ENCODE measurements at regions of chr10 and their contacts with region 1.

Region 1: DNA sequence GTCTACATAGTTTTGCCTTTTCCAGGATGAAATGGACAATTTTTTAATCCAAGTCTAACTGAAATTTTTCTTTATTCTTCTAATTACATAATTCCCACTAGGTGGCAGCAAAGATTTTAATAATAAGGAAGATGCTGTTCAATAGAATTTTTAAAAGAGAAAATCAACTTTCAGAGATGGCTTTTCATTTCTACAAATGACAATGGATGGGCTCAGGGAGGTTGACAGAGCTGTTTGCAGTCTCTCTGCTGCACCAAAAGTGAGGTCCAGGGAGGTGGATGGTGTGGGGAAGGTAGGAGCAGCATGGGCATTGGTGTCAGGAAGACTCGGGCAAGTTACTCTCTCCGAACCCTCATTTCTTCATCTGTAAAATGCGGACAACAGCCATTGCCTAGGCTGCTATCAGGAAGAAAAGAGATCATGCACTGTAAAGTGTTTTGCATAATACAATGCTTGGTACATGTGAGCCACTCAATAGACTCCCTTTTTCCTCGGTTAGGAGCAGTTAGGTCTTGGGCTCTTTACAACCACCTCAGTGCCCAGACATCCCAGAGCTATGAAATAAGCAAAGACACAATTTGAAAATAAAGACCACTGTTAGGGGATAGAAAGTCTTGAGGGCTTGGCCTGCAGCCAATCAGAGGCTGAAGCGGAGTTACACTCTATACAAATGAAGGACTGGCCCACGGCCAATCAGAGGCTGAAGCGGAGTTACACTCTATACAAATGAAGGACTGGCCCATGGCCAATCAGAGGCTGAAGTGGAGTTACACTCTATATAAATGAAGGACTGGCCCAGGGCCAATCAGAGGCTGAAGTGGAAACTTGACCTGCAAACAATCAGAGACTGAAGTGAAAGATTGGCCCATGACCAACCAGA is 107.1 kb downstream of the ABLIM1 start:
- DNase-seq: no peak
- H3K4me3 ChIP-seq: peak overlapping the region; percentile 13 to 46
- H3K27ac ChIP-seq: no peak overlapping the region
- H3K4me1 ChIP-seq: peaks cover 0 to 2% of the 10 kb centered on the region in 2 donors
- H3K27me3 ChIP-seq: no peaks in the 10 kb centered on the region
- CTCF ChIP-seq: peak; percentile 36 to 68 (median 45)

Region 2: DNA sequence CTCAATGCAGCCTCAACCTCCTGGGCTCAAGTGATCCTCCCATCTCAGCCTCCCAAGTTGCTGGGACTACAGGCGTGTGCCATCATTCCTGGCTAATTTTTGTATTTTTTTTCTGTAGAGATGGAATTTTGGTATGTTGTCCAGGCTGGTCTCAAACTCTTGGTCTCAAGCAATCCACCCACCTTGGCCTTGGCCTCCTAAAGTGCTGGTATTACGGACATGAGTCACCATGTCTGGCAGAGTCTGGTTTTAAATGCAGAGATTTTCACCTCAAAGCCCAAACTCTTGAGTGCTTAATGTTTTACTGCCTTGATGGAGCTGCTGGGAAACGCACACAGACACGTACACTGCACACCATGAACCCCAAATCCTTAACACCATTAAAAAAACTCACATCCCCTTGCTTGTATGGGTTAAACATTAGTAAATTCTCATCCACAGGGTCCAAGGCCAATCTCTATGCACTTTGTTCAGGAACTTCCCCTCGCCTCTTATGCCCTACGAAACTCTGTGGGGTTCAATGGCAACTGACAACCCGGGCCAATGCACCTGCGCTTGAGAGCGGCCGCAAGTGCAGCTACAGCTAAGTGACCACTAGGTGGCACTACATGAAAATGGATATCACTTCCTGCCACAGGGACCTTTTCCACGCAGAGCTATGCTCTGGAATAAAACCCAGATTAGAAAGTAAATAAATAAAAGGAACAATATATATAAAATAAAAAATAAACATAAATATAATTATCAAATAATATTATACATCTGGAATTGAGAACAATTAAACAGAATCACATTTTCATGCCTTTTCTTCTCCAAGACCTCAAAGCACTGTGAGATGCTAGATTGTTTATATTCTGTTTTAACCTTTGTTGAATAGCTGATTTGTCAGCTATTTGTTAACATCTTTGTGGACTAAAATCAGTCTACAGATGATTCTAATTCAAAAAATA is 79.8 kb before region 1 on chr10:
- intact Hi-C with region 1: loop called (anchors 1 kb)
- DNase-seq: peak in 1 of 2 donors; percentile 75
- H3K4me3 ChIP-seq: no peak overlapping the region
- H3K27ac ChIP-seq: no peak overlapping the region
- H3K4me1 ChIP-seq: no peaks in the 10 kb centered on the region
- H3K27me3 ChIP-seq: no peaks in the 10 kb centered on the region
- CTCF ChIP-seq: peak; percentile 75 to 94 (median 92)

Region 3: GRCh38 chr10:114698271-114699061 is 147.5 kb after region 1 on chr10:
- intact Hi-C with region 1: loop called (anchors 1 kb)
- DNase-seq: no peak
- H3K4me3 ChIP-seq: no peak overlapping the region
- H3K27ac ChIP-seq: no peak overlapping the region
- H3K4me1 ChIP-seq: peaks cover 6 to 8% of the 10 kb centered on the region in 2 donors
- H3K27me3 ChIP-seq: no peaks in the 10 kb centered on the region
- CTCF ChIP-seq: no peak

Region 4: DNA sequence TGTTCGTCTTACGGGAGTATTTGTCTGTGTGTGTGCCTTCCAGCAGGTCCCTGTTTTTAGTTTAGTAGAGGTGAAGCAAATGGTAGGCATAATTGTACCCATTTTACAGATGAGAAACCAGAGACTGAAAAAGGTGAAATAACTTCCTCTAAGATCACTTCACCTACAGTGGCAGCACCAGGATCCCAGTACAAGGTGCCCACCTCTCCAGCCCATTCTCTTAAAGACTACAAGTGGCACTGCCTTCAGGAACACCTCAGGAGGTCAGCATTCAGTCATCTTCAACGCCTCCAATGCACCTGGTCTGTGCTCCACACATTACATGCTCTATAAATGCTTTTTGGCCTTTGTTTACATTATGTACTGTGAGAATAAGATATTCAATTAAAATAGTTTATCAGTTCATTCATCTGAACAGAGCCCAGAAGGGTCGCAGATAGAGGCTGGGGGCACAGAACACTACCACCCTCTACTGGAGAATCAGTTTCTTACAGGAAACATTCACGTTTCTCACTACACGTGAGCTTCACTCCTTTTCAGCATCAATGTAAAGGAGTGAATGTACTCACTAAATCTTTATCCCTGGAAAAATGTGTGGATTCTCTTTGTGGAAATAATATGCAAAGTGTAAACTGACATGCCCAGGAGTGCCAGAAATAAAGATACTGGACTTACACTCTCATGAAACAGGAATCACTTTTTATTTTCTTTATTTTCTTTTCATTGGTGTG is 152.5 kb after region 1 on chr10:
- intact Hi-C with region 1: loop called (anchors 1 kb)
- DNase-seq: no peak
- H3K4me3 ChIP-seq: no peak overlapping the region
- H3K27ac ChIP-seq: no peak overlapping the region
- H3K4me1 ChIP-seq: no peaks in the 10 kb centered on the region
- H3K27me3 ChIP-seq: no peaks in the 10 kb centered on the region
- CTCF ChIP-seq: peak; percentile 41 to 63 (median 56)

Region 5: GRCh38 chr10:115129752-115130151 is 578.8 kb after region 1 on chr10:
- intact Hi-C with region 1: loop called (anchors 2 kb)
- DNase-seq: no peak
- H3K4me3 ChIP-seq: no peak overlapping the region
- H3K27ac ChIP-seq: no peak overlapping the region
- H3K4me1 ChIP-seq: no peaks in the 10 kb centered on the region
- H3K27me3 ChIP-seq: no peaks in the 10 kb centered on the region
- CTCF ChIP-seq: peak; percentile 30 to 54 (median 42)